ENCODE measurements at regions of chrX and their contacts with region 1.

Region 1: DNA sequence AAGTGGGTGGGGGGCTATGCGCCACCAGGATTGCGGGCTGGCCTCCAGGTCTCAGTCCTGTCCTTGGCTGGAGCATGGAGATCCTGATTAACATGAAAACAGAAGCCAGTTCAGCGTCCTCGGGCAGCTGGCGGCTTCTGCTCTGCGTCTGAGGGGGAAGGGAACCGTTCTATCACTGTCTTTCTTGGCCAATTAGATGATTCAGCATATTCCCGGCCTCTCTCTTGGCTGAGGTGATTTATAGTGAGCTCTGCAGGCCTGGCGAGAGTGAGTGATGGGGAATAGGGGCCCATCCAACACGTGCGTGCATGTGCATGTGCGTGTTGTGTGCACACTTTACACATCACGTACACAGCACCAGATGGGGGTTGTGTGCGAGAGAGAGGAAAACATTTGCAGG is 145.8 kb upstream of the ATP6AP2 start:
- DNase-seq: no peak
- H3K4me3 ChIP-seq: peak overlapping the region in 2 of 4 donors; percentile 2 to 19
- H3K27ac ChIP-seq: no peak overlapping the region
- H3K4me1 ChIP-seq: peaks cover 0 to 7% (median 0%) of the 10 kb centered on the region in 4 donors
- H3K27me3 ChIP-seq: no peaks in the 10 kb centered on the region
- CTCF ChIP-seq: no peak
- EP300 ChIP-seq: no peak
- POLR2A ChIP-seq: no peak

Region 2: GRCh38 chrX:40374486-40374885 is 60.5 kb before region 1 on chrX:
- intact Hi-C with region 1: loop called (anchors 10 kb)
- DNase-seq: no peak
- H3K4me3 ChIP-seq: no peak overlapping the region
- H3K27ac ChIP-seq: no peak overlapping the region
- H3K4me1 ChIP-seq: no peaks in the 10 kb centered on the region
- H3K27me3 ChIP-seq: no peaks in the 10 kb centered on the region
- CTCF ChIP-seq: no peak
- EP300 ChIP-seq: no peak
- POLR2A ChIP-seq: no peak

Measured in sigmoid colon (tissue), 7 donors.